GM10248 (cell line): ENCODE measurements at regions of chr4 and their contacts with region 1.

Region 1: DNA sequence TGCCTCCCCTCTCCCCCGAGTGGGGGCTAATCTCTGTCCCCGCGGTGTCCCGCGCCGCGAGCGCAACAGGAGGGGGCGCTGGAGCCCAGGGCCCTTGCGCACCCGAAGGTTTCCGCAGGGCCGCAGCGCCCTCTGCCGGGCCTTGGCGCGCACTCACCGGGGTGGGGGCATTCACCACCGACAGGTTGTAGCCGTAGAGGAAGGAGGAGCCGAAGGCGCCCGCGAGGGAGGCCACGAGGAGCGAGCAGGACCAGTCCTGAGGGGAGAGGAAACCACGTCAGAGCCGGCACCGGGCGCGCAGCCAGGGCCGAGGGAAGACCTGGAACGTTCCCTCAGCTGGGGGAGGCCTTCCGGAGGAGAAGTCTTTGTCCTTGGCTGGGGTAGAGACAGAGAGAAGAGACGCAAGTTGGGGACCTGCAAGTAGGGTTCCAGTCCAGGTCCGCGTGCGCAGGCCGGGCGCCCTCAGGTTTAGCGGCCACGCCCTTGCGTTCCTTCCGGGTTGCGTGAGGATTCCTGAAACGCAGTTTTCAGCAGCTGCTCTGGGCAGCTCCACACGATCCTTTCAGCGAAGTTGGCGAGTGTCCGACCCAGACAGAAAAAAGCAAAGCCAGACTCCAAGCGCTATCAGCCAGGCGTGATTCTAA is 2.4 kb downstream of the SLC2A9 start:
- DNase-seq: peak; percentile 96
- CTCF ChIP-seq: peak; percentile 100

Region 2: DNA sequence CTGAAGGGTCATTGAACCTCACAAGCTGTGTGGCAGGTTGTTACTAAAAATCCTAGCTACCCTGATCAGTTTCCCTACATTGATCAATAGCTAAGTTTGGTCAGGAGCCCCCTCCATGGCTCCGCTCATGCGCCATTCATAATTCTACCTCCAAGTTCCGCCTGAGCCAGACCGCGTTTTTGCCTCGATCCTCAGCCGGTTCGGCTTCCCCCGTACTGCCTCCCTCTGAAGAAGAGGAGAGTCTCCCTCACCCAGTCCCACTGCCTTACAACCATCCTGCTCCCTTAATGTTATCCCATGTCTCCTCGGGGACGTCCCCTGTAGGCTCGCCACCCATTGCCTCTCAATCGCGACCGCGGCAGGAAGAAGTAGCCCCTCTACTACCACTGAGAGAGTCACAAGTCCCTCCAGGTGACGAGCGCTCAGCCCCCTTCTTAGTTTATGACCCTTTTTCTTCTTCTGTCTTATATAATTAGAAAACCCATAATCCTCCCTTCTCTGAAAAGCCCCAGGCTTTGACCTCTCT is 416.5 kb before region 1 on chr4:
- CTCF ChIA-PET with region 1: no interaction called
- POLR2A ChIA-PET with region 1: no interaction called
- DNase-seq: no peak
- CTCF ChIP-seq: no peak

Region 3: GRCh38 chr4:9704551-9705332 is 314.2 kb before region 1 on chr4:
- CTCF ChIA-PET with region 1: interaction called, 76 read pairs
- POLR2A ChIA-PET with region 1: no interaction called
- DNase-seq: no peak
- CTCF ChIP-seq: no peak

Region 4: DNA sequence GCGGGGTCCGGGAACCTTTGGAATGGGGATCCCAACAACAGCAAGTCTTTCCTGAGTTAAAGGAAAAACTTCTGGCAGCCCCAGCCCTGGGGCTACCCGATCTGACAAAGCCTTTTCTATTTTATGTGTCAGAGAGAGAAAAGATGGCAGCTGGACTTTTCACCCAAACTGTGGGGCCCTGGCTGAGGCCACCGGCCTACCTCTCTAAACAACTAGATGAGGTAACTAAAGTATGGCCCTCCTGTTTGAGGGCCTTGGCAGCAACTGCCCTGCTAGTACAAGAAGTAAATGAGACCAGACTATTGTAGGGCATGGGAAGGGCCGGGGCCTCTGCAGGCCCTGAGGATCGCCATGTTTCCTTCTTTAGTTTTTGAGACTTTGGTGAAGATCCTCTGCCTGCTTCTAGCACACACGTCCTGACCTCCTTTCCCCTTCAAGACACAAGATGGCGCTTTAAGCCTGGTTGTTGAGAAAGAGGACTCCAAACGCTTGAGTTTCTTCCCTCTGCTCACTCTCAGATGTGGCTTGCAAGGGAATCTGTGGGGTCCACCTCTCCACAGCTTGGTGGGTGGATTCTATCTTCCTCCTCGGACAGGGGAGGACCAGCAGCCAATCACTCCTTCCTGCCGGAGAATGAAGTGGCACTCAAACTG is 256.0 kb before region 1 on chr4:
- CTCF ChIA-PET with region 1: interaction called, 162 read pairs
- POLR2A ChIA-PET with region 1: no interaction called
- DNase-seq: peak; percentile 73
- CTCF ChIP-seq: peak; percentile 83

Region 5: DNA sequence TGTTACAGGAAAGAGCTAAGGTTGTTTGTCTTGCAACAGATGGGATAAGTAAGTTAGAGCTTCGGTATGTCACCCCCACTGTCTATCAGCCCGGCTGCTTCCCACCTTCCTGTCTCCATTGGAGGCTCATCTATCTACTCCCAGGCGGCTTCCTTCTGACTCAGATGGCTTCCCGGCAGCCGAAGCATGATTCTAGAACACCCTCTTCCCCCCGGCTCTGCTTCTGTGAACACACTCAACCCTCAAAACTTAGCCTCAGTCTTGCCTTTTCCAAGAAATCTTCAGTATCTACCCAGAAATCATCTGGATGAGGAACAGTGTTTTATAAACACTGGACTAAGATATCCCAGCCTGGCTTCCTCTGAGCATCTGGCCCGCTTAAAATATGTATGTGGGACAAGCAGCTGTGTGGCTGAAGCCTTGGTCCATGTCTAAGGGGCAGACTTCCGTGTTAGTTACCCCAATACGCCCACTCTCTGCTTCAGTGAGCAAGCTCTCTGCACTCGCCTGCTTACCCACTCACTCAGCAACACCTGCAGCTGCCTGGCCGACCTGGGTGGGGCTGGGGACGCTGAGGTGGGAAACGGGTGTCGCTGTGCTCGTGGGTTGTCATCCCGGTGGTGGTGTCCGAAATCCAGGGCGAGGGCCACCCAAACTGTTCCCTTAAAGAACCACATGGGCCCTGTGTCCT is 14.4 kb after region 1 on chr4:
- CTCF ChIA-PET with region 1: interaction called, 30 read pairs
- POLR2A ChIA-PET with region 1: no interaction called
- DNase-seq: no peak
- CTCF ChIP-seq: no peak

Region 6: DNA sequence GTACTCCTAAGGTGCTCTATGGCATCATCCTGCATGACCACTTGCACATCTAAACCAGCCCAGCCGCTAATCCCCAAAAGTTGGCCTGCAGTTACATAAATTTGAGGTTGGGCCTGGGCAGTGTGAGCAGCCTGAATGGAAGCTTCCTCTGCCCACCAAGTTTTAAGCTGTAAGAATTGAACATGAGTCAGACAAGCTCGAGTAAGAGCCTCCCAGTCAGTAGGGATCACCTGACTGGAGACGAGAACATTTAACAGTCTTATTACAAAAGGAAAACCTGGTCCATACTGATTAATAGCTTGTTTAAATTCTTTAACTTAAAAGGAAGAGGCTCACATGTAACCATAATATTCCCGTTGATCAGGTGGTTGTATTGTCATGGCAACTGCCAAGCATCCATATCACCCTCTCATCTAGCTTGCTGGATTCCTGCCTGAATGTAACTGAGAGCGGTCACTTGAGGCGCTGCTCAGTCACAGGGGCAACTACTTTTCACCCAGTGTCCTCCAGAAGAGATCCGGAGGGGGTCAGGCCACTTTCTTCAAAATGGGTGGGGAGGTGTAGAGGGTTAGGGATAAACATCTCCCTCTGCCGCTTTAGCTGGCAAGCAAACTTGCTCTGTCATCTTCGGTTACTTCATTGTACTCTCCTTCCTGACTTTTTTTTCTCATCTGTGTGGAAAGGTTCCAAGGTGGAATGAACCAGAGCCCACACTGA is 154.3 kb after region 1 on chr4:
- CTCF ChIA-PET with region 1: no interaction called
- POLR2A ChIA-PET with region 1: no interaction called
- DNase-seq: no peak
- CTCF ChIP-seq: no peak

Region 7: DNA sequence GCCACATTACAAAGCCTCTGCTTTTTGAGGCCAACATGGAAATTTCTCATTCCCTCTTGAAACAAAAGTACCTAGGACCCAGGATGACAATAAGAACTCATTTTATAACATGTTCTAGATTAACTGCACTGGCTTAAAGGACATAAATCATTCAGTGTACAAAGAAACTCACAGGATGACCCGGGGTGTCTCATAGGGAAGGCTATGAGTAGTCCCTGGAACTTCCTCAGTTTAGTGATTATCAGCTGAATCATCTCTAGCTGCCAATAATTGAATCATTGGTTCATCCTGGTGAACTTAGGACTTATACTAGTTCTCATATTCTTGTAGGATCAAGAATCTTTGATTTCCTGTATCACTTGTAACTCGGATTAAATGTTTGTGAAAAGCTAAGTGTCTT is 193.5 kb after region 1 on chr4:
- CTCF ChIA-PET with region 1: no interaction called
- POLR2A ChIA-PET with region 1: no interaction called
- DNase-seq: no peak
- CTCF ChIP-seq: no peak

Region 8: DNA sequence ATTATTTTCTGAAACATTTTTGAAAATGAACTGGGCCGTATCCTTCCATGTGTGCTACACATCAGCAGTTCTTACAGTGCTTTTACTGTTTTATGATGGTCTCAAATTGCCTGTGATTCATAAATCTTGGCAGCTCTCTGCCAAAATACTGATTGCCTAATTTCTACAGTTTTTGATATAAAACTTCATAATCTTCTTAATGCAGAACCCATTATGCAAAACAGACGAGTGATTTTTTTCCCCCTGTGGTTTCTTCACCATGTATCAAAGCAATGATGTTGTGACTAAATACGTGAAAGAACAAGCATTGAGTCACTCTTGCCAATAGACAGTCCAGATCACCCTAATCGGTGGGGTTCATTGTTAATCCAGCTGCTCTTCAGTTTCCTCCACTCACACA is 254.1 kb after region 1 on chr4:
- CTCF ChIA-PET with region 1: no interaction called
- POLR2A ChIA-PET with region 1: no interaction called
- DNase-seq: no peak
- CTCF ChIP-seq: no peak